ENCODE measurements at regions of chr12 and their contacts with region 1.

Region 1: DNA sequence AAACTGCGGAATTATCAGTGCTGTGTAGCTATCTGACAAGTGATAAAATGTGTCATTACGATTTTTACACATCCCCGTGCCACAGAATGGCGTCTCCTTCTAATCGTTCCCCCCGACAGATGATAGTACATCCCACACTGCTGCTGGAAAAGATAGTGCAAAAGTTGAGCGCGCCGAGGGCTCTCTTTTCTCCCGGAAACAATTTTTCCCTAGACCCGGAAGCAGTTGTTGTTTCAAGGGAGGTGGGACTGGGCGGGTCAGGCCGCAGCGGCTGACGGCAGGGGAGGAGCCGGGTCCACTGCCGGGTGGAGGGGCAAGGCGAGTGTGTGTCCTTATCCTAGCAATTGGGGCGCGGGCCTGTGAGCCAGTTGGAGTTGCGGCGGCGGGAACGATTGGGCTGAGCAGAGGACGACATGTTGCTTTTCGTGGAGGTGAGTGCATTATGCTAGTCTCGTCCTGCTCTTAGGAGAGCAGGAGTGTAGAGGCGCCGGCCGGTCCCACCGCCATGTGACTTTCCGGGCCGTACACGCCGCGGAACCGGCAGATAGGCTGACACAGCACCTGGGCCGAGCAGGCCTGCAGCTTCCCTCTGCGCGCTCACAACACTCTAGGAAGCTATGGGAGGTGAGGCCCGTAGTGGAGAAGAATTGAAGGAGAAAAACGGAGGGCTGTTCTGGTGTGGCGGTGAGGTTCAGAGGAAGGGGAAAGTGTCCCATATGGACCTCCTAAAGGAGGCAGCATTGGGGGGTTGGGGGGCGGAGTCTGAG is at the start of gene LARP4:
- DNase-seq: peak; percentile 91
- H3K4me3 ChIP-seq: peak within 1 kb of the TSS; percentile 68 to 71
- H3K27ac ChIP-seq: peak within 1 kb of the TSS; percentile 88 to 94
- H3K4me1 ChIP-seq: no peaks in the 10 kb centered on the region
- H3K27me3 ChIP-seq: no peaks in the 10 kb centered on the region
- CTCF ChIP-seq: no peak
- POLR2A ChIP-seq: peak; percentile 77
- total RNA-seq, gene LARP4: 29.7 to 32.9 TPM

Region 2: GRCh38 chr12:50111693-50112455 is 288.9 kb before region 1 on chr12 and contains the start of gene COX14:
- intact Hi-C with region 1: loop called (anchors 2 kb)
- DNase-seq: peak; percentile 99
- H3K4me3 ChIP-seq: peak within 1 kb of the TSS; percentile 83 to 85
- H3K27ac ChIP-seq: peak within 1 kb of the TSS; percentile 85 to 92
- H3K4me1 ChIP-seq: no peaks in the 10 kb centered on the region
- H3K27me3 ChIP-seq: no peaks in the 10 kb centered on the region
- CTCF ChIP-seq: peak; percentile 88 to 97 (median 94)
- POLR2A ChIP-seq: peak; percentile 92
- total RNA-seq, gene COX14: 59.9 to 84.6 TPM

Region 3: DNA sequence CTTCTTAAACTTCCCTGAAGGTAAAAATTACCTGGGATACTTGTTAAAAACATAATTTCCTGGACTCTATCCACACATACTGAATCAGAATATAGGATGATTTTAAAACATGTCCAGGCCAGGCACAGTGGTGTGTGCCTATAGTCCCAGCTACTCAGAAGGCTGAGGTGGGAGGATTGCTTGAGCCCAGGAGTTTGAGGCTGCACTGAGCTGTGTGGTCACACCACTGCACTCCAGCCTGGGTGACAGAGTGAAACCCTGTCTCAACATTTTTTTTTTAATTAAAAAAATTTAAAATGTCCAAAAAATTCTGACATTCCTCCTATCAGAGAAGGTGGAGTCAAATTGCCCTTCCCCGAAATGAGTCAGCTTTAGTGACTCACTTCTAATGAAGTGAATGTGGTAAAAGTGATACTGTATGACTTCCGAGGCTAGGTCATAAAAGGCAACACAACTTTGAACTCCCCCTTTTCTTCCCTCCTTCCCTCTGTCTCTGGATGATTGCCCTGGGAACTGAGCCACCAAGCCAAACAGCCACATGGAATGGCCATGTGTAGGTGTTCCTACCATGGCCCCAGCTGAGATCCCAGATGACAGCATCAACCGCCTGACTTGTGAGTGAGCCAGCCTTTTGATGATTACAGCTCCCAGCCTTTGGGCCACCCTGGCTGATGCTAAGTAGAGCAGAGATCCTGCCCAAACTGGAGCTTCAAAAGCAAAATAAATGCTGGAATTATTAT is 153.7 kb before region 1 on chr12:
- intact Hi-C with region 1: no loop called
- DNase-seq: peak; percentile 28
- H3K4me3 ChIP-seq: no peak overlapping the region
- H3K27ac ChIP-seq: peak overlapping the region; percentile 53 to 55
- H3K4me1 ChIP-seq: no peaks in the 10 kb centered on the region
- H3K27me3 ChIP-seq: no peaks in the 10 kb centered on the region
- CTCF ChIP-seq: no peak
- POLR2A ChIP-seq: no peak

Region 4: DNA sequence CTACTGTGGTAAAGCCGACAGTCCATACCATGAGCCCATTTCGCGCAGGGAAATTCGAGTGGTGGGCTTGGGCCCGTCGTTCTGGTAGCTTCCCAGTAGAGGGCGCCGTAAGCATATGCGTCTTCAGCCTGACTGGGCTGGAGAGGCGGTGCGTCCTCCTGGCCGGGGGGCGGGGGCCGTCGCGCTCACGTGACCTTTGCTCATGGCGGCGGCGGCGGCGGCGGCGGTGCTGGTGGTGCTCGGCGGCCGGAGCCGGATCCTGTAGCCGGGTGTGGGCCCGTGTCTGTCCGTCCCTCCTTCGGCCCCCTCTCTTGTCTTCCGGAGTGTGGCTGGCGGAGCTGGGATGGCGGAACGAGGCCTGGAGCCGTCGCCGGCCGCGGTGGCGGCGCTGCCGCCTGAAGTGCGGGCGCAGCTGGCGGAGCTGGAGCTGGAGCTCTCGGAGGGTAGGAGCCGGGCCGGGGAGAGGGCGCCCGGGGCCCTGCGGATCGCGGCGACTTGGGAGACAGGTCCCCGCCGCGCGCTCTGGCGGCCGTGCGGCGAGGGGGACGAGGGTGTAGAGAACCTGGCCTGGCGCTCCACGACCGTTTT is 104.1 kb after region 1 on chr12 and contains the start of gene DIP2B:
- intact Hi-C with region 1: no loop called
- DNase-seq: peak; percentile 94
- H3K4me3 ChIP-seq: peak within 1 kb of the TSS; percentile 71 to 79
- H3K27ac ChIP-seq: peak within 1 kb of the TSS; percentile 92 to 95
- H3K4me1 ChIP-seq: peaks cover 5% of the 10 kb centered on the region
- H3K27me3 ChIP-seq: no peaks in the 10 kb centered on the region
- CTCF ChIP-seq: peak; percentile 90 to 98 (median 97)
- POLR2A ChIP-seq: peak; percentile 85
- total RNA-seq, gene DIP2B: 23.2 to 56.3 TPM

Measured in prostate gland (tissue), 2 donors.